BJ (cell line): ENCODE measurements at regions of chr6 and their contacts with region 1.

Region 1: DNA sequence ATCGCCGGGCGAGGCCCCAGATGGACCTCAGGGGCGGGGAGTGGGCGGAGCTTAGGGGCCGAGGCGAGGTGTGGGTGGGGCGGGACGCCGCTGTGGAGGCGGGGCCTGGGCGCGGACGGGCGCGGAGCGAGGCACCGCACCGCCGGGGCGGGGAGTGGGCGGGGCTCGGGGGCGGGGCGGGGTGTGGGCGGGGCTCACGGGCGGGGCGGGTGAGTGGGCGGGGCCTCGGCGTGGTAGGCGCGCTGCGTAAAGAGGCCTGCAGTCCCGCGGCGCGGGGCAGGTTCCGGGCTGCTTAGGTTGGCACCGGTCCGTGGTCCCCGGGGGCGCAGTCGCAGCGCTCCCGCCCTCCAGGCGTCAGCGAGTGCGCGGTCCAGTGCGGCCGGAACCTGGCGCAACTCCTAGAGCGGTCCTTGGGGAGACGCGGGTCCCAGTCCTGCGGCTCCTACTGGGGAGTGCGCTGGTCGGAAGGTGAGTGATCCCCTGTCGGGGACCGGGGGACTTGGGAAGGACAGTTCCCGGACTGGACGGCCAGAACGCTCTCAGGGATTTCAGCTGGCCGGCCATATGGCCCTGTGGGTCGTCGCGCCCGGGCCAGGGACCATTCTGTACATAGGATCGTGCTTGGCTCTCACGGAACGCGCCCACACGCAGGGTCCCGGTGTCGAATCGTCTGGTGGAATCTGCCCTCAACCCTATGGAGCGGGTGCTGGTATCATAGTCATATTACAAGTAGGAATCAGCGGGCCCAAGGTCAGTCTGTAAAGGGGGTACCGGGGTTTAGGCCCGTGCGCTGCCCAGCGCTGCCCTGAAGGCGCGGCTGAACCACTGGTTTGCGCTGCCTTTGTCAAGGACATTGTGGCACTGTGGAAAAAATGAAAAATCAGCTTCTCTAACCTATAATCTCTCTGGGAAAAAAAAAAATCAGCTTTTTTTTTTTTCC is at the start of gene NQO2:
- DNase-seq: no peak
- H3K4me3 ChIP-seq: peak within 1 kb of the TSS; percentile 87
- H3K27me3 ChIP-seq: no peaks in the 10 kb centered on the region
- CTCF ChIP-seq: no peak
- polyA plus RNA-seq, gene NQO2: 54.4 and 56.2 TPM in 2 replicates

Region 2: GRCh38 chr6:3019065-3019464 is 19.2 kb after region 1 on chr6:
- CTCF ChIA-PET with region 1: interaction called, 15 read pairs
- POLR2A ChIA-PET with region 1: no interaction called
- DNase-seq: no peak
- H3K4me3 ChIP-seq: no peak overlapping the region
- H3K27me3 ChIP-seq: no peaks in the 10 kb centered on the region
- CTCF ChIP-seq: no peak

Region 3: DNA sequence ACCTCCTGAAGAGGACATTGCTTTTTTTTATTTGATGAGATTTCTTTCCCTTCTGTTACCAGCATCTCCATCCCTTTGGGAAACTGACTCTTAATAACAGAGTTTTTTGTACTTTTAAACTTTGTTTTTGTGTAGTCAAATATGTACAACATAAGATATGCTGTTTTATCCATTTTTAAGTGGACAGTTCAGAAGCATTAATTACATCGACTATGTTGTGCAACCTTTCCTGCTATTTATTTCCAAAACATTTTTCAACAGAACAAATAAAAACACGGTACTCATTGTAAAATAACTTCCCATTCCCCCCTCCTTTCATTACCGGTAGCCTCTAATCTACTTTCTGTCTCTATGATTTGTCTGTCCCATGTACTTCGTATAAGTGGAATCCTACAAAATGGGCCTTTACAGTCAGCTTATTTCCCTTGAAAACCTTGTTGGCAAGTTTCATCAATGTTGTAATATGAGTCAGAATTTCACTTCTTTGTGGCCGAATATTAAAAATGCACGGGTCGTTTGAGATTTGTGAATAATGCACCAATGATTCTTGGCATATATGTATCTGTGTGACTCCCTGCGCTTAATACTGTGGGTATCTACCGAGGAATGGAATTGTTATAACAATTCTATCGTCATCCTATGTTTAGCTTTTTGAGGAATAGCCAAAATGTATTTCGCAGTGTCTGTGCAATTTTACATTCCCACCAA is 57.3 kb after region 1 on chr6:
- CTCF ChIA-PET with region 1: interaction called, 14 read pairs
- POLR2A ChIA-PET with region 1: interaction called, 3 read pairs
- DNase-seq: no peak
- H3K4me3 ChIP-seq: no peak overlapping the region
- H3K27me3 ChIP-seq: no peaks in the 10 kb centered on the region
- CTCF ChIP-seq: no peak

Region 4: GRCh38 chr6:3063733-3064700 is 64.1 kb after region 1 on chr6:
- CTCF ChIA-PET with region 1: interaction called, 11 read pairs
- POLR2A ChIA-PET with region 1: interaction called, 3 read pairs
- DNase-seq: peak; percentile 73
- H3K4me3 ChIP-seq: peak overlapping the region; percentile 71
- H3K27me3 ChIP-seq: no peaks in the 10 kb centered on the region
- CTCF ChIP-seq: 0 out of 2 replicates have a peak, but pooled peaks have one; percentile 15

Region 5: GRCh38 chr6:3108746-3109414 is 109.0 kb after region 1 on chr6:
- CTCF ChIA-PET with region 1: no interaction called
- POLR2A ChIA-PET with region 1: no interaction called
- DNase-seq: no peak
- H3K4me3 ChIP-seq: no peak overlapping the region
- H3K27me3 ChIP-seq: no peaks in the 10 kb centered on the region
- CTCF ChIP-seq: no peak